ENCODE measurements at regions of chr4 and their contacts with region 1.

Region 1: DNA sequence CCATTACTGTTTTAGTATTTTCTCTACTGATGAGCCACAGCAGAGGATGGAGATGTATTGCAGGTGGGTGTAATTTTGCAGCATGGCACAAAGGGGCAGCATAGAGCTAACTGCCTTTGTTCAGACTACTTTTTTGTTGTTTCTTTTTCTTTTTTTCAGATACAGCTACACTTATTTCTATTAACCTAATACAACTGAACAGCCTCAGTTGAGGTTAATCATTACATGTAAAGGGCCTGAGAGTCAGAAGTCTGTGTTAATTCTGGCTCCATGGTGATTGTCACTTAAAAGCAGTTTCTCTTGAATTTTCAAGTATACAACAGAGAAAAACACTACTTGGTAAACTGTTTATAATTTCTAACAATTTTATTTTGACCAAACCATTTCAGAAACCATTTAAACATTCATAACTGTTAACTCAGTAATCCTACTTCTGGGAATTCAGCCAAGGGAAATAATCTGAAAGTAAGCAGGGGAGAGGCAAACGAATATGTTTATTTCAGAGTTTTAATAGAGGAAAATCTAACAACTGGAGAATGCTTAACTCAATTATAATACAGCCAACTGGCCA is 13.9 kb upstream of the PPEF2 start:
- DNase-seq: peak; percentile 89
- ATAC-seq: peak; percentile 94
- H3K4me3 ChIP-seq: no peak overlapping the region
- H3K27ac ChIP-seq: no peak overlapping the region
- H3K4me1 ChIP-seq: peaks cover 12% of the 10 kb centered on the region
- H3K27me3 ChIP-seq: no peaks in the 10 kb centered on the region
- CTCF ChIP-seq: peak; percentile 81
- POLR2A ChIP-seq: no peak
- RAD21 ChIP-seq: peak; percentile 63

Region 2: GRCh38 chr4:75904076-75904475 is 12.1 kb before region 1 on chr4:
- CTCF ChIA-PET with region 1: interaction called, 10 read pairs
- POLR2A ChIA-PET with region 1: no interaction called
- dilution Hi-C with region 1: no loop called
- in situ Hi-C with region 1: no loop called
- intact Hi-C with region 1: no loop called
- DNase-seq: no peak
- ATAC-seq: no peak
- H3K4me3 ChIP-seq: no peak overlapping the region
- H3K27ac ChIP-seq: no peak overlapping the region
- H3K4me1 ChIP-seq: no peaks in the 10 kb centered on the region
- H3K27me3 ChIP-seq: peaks cover 5% of the 10 kb centered on the region
- CTCF ChIP-seq: no peak
- POLR2A ChIP-seq: no peak
- RAD21 ChIP-seq: no peak

Region 3: DNA sequence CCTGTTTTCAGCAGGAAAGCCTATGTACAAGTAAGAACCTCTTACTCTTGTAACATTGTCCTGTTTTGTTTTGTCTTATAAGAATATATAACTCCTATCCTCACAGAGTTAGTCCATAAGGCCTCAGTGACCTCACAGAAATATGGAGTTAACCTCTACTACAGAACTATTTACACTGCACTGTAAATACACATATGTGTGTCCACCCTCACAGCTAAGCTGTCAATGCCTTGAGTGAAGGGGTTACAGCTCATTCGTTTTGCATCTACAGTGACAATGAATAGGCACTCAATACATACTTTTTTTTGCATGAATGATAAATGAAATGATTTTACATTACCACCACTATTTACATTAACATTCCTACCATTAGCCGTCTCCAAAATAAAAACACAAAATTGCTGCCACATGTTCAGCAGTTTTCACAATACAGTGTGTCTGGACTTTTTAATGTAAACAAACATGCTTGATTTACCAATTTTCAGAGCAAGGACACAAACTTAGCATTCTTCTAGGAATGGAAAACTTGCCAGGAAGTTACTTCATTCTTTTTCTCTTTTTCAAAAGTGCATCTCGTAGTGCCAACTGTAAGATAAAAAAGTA is 34.1 kb after region 1 on chr4:
- CTCF ChIA-PET with region 1: interaction called, 3 read pairs
- POLR2A ChIA-PET with region 1: no interaction called
- dilution Hi-C with region 1: no loop called
- in situ Hi-C with region 1: no loop called
- intact Hi-C with region 1: loop called (anchors 5 kb)
- DNase-seq: peak; percentile 41
- ATAC-seq: peak; percentile 73
- H3K4me3 ChIP-seq: no peak overlapping the region
- H3K27ac ChIP-seq: no peak overlapping the region
- H3K4me1 ChIP-seq: no peaks in the 10 kb centered on the region; the same call in 1 of the 2 replicates
- H3K27me3 ChIP-seq: no peaks in the 10 kb centered on the region
- CTCF ChIP-seq: no peak
- POLR2A ChIP-seq: no peak
- RAD21 ChIP-seq: no peak

Region 4: GRCh38 chr4:75989846-75990528 is 73.8 kb after region 1 on chr4:
- CTCF ChIA-PET with region 1: no interaction called
- POLR2A ChIA-PET with region 1: no interaction called
- dilution Hi-C with region 1: no loop called
- in situ Hi-C with region 1: no loop called
- intact Hi-C with region 1: loop called (anchors 1 kb)
- DNase-seq: peak; percentile 15
- ATAC-seq: no peak
- H3K4me3 ChIP-seq: peak overlapping the region; percentile 86
- H3K27ac ChIP-seq: peak overlapping the region; percentile 84
- H3K4me1 ChIP-seq: peaks cover 2% of the 10 kb centered on the region
- H3K27me3 ChIP-seq: no peaks in the 10 kb centered on the region
- CTCF ChIP-seq: no peak
- POLR2A ChIP-seq: no peak
- RAD21 ChIP-seq: no peak

Region 5: GRCh38 chr4:76067652-76068286 is 151.6 kb after region 1 on chr4:
- CTCF ChIA-PET with region 1: no interaction called
- POLR2A ChIA-PET with region 1: no interaction called
- dilution Hi-C with region 1: no loop called
- in situ Hi-C with region 1: no loop called
- intact Hi-C with region 1: loop called (anchors 10 kb)
- DNase-seq: peak; percentile 76
- ATAC-seq: peak; percentile 99
- H3K4me3 ChIP-seq: no peak overlapping the region
- H3K27ac ChIP-seq: no peak overlapping the region
- H3K4me1 ChIP-seq: no peaks in the 10 kb centered on the region
- H3K27me3 ChIP-seq: no peaks in the 10 kb centered on the region; the same call in 1 of the 2 replicates
- CTCF ChIP-seq: peak; percentile 92
- POLR2A ChIP-seq: peak; percentile 36; the same call in 1 of the 2 replicates
- RAD21 ChIP-seq: peak; percentile 90

Measured in IMR-90 (cell line).